Heart left ventricle (tissue), 16 donors: ENCODE measurements at regions of chr1 and their contacts with region 1.

Region 1: DNA sequence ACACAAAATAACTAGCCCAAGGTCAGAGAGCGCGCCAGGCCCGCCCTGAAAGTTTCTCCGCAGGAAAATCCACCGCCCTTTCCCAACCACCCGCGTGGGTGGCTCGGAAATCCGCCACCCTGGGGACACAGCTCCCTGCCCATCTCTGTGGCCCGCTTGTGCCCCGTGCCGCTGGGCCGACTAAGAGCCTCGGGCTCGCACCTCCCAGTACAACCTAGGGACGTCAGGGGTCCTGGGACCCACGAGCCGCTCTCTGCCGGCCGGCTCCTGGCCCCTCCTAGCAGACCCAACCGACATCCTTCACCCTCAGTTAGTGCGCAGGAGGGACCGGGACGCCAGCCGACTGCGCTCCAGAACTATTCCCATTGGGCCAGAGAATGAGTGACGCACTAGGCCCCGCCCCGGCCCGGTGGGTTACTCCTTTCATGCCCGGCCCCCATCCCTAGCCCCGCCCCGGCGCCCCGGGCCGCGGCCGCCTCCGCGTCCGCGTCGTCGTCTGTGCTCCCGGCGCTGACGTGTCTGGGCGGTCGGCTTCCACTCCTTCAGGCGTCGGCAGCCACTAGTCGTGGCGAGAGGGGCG is 395 bp upstream of the UAP1 start:
- DNase-seq: peak; percentile 99
- ATAC-seq: peak; percentile 97 to 99 (median 98)
- H3K4me3 ChIP-seq: peak overlapping the region; percentile 65 to 98 (median 84)
- H3K27ac ChIP-seq: peak overlapping the region; percentile 90 to 99 (median 96)
- H3K4me1 ChIP-seq: peaks cover 3 to 39% (median 14%) of the 10 kb centered on the region in 12 donors
- H3K27me3 ChIP-seq: no peaks in the 10 kb centered on the region
- CTCF ChIP-seq: no peak
- POLR2A ChIP-seq: peak in 1 of 2 donors; percentile 55

Region 2: GRCh38 chr1:162497723-162498500 is 63.2 kb before region 1 on chr1 and contains the start of gene UHMK1:
- intact Hi-C with region 1: loop called in 6 of 10 experiments (anchors 5 kb)
- DNase-seq: peak; percentile 90 to 94 (median 92)
- ATAC-seq: peak; percentile 98 to 100 (median 100)
- H3K4me3 ChIP-seq: peak within 1 kb of the TSS; percentile 74 to 100 (median 96)
- H3K27ac ChIP-seq: peak within 1 kb of the TSS; percentile 89 to 99 (median 95)
- H3K4me1 ChIP-seq: peaks cover 5 to 47% (median 14%) of the 10 kb centered on the region in 12 donors
- H3K27me3 ChIP-seq: no peaks in the 10 kb centered on the region
- CTCF ChIP-seq: no peak
- POLR2A ChIP-seq: peak in 1 of 2 donors; percentile 55
- total RNA-seq, gene UHMK1: 17.2 to 34.5 (median 22.8) TPM